MCF 10A (cell line): ENCODE measurements at regions of chr1 and their contacts with region 1.

Region 1: DNA sequence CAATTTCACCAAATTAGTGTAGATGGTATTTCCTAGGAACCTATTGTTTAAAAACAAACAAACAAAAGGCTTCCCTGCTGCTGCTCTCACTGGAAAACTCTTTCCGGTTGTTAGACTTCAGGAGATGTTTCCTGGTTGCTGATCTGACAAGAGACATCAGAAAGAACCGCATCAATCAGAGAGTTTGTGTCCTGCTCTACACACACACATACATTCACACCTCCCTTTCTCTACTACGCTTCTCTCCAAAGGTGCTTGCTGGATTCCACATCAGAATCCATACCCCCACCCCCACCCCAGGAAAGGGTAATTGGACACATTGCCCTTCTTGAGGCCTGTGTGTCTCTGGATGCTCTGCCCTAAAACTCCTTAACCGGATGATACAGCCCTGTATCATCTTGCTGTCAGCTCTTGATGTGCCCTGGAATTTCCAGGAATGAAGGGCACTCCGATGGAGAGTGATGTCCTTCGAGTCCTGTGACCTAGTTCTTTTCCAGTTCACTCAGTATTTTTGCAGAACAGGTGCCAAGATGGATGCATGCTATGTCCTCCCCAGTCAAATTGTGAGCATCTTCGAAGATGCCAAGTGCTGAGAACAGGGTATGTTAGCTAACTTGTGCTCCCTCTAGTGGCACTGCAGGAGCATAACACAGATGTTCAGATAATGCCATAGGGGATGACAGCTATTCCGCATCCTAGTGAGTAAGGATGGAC is 113.7 kb upstream of the SLC35F3 start:
- DNase-seq: peak; percentile 84
- H3K4me3 Mint-ChIP-seq: no peak overlapping the region
- H3K27ac Mint-ChIP-seq: no peak overlapping the region
- H3K4me1 Mint-ChIP-seq: no peaks in the 10 kb centered on the region
- H3K27me3 Mint-ChIP-seq: no peaks in the 10 kb centered on the region
- CTCF ChIP-seq: peak; percentile 100

Region 2: GRCh38 chr1:233364695-233365539 is 425.9 kb before region 1 on chr1:
- CTCF ChIA-PET with region 1: interaction called, 4 read pairs
- POLR2A ChIA-PET with region 1: no interaction called
- intact Hi-C with region 1: loop called (anchors 1 kb)
- DNase-seq: peak; percentile 56
- H3K4me3 Mint-ChIP-seq: no peak overlapping the region
- H3K27ac Mint-ChIP-seq: peak overlapping the region; percentile 54
- H3K4me1 Mint-ChIP-seq: peaks cover 17% of the 10 kb centered on the region
- H3K27me3 Mint-ChIP-seq: no peaks in the 10 kb centered on the region
- CTCF ChIP-seq: peak; percentile 72

Region 3: GRCh38 chr1:233448109-233448689 is 342.6 kb before region 1 on chr1:
- CTCF ChIA-PET with region 1: interaction called, 230 read pairs
- POLR2A ChIA-PET with region 1: no interaction called
- intact Hi-C with region 1: no loop called
- DNase-seq: no peak
- H3K4me3 Mint-ChIP-seq: no peak overlapping the region
- H3K27ac Mint-ChIP-seq: no peak overlapping the region
- H3K4me1 Mint-ChIP-seq: peaks cover 4% of the 10 kb centered on the region
- H3K27me3 Mint-ChIP-seq: no peaks in the 10 kb centered on the region
- CTCF ChIP-seq: no peak

Region 4: DNA sequence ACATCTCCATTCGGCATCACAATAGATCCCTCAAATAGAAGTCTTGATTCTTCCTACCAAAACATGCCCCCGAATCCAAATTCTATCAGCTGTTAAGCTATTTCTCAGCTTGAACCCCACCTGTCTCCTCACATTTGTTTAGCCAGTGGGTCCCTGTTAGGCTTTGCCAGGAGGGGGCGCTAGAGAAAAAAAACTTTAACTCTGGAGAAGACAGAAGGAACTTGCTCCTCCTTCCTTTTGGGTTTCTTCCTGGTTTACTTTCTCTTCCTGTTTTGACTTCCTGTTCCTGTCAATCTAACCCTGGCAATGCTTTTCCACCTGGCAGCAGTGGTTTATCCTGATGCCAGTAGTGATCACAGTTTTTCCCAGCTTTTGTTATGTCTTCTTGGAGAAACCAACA is 272.5 kb before region 1 on chr1:
- CTCF ChIA-PET with region 1: interaction called, 7 read pairs
- POLR2A ChIA-PET with region 1: no interaction called
- intact Hi-C with region 1: loop called (anchors 1 kb)
- DNase-seq: peak; percentile 83
- H3K4me3 Mint-ChIP-seq: no peak overlapping the region
- H3K27ac Mint-ChIP-seq: no peak overlapping the region
- H3K4me1 Mint-ChIP-seq: peaks cover 14% of the 10 kb centered on the region
- H3K27me3 Mint-ChIP-seq: no peaks in the 10 kb centered on the region
- CTCF ChIP-seq: peak; percentile 83

Region 5: DNA sequence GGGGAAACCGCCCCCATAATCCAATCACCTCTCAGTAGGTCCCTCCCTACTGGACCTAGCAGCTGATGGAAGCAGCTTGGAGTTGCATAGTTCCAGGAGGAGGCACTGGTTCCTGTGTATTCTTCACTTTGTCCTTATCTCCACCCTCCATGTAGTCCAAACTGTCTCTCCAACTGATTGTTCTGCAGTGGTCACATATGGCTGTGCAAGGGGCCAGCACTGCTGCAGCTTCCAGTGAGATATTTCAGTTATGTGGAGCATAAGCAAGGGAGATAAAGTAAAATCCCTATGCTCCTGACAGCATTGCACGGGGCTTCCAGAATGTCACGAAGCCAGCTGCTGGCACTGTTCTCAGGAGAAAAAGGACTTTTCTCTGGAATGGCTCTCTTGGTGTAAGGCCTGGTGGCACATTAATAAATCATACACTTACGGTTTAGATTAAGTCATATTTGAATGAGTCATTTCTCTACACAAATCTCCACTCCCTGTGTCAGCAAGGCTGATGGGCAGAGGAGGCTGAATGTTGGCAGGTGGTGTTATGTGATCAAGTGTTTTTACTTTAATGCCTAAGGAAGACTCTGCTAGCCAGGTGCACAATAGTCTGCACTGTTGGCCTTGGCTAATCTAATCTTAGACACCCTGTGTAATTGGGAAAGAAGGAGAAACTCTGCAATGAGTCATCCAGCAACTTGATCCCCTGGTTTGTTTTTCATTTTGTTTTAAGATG is 83.5 kb before region 1 on chr1:
- CTCF ChIA-PET with region 1: interaction called, 6 read pairs
- POLR2A ChIA-PET with region 1: no interaction called
- intact Hi-C with region 1: loop called (anchors 1 kb)
- DNase-seq: peak; percentile 99
- H3K4me3 Mint-ChIP-seq: no peak overlapping the region
- H3K27ac Mint-ChIP-seq: peak overlapping the region; percentile 87
- H3K4me1 Mint-ChIP-seq: peaks cover 46% of the 10 kb centered on the region
- H3K27me3 Mint-ChIP-seq: no peaks in the 10 kb centered on the region
- CTCF ChIP-seq: no peak

Region 6: GRCh38 chr1:233802611-233803010 is 11.8 kb after region 1 on chr1:
- CTCF ChIA-PET with region 1: interaction called, 20 read pairs
- POLR2A ChIA-PET with region 1: interaction called, 5 read pairs
- intact Hi-C with region 1: no loop called
- DNase-seq: no peak
- H3K4me3 Mint-ChIP-seq: no peak overlapping the region
- H3K27ac Mint-ChIP-seq: no peak overlapping the region
- H3K4me1 Mint-ChIP-seq: no peaks in the 10 kb centered on the region
- H3K27me3 Mint-ChIP-seq: no peaks in the 10 kb centered on the region
- CTCF ChIP-seq: no peak

Region 7: GRCh38 chr1:234040446-234041306 is 249.9 kb after region 1 on chr1:
- CTCF ChIA-PET with region 1: no interaction called
- POLR2A ChIA-PET with region 1: no interaction called
- intact Hi-C with region 1: no loop called
- DNase-seq: peak; percentile 29
- H3K4me3 Mint-ChIP-seq: no peak overlapping the region
- H3K27ac Mint-ChIP-seq: no peak overlapping the region
- H3K4me1 Mint-ChIP-seq: peaks cover 7% of the 10 kb centered on the region
- H3K27me3 Mint-ChIP-seq: no peaks in the 10 kb centered on the region
- CTCF ChIP-seq: no peak

Region 8: GRCh38 chr1:234065794-234066447 is 275.1 kb after region 1 on chr1:
- CTCF ChIA-PET with region 1: interaction called, 10 read pairs
- POLR2A ChIA-PET with region 1: no interaction called
- intact Hi-C with region 1: loop called (anchors 1 kb)
- DNase-seq: peak; percentile 89
- H3K4me3 Mint-ChIP-seq: no peak overlapping the region
- H3K27ac Mint-ChIP-seq: no peak overlapping the region
- H3K4me1 Mint-ChIP-seq: peaks cover 5% of the 10 kb centered on the region
- H3K27me3 Mint-ChIP-seq: no peaks in the 10 kb centered on the region
- CTCF ChIP-seq: peak; percentile 98